IMR-90 (cell line): ENCODE measurements at regions of chr14 and their contacts with region 1.

Region 1: GRCh38 chr14:63543000-63543825 is at the start of gene PPP2R5E:
- DNase-seq: peak; percentile 99
- ATAC-seq: peak; percentile 97
- H3K4me3 ChIP-seq: peak within 1 kb of the TSS; percentile 72
- H3K27ac ChIP-seq: peak within 1 kb of the TSS; percentile 80
- H3K4me1 ChIP-seq: no peaks in the 10 kb centered on the region
- H3K27me3 ChIP-seq: no peaks in the 10 kb centered on the region
- CTCF ChIP-seq: no peak
- POLR2A ChIP-seq: peak; percentile 84
- RAD21 ChIP-seq: 0 out of 2 replicates have a peak, but pooled peaks have one; percentile 14
- total RNA-seq, gene PPP2R5E: 12.2 and 21.1 TPM in 2 replicates

Region 2: DNA sequence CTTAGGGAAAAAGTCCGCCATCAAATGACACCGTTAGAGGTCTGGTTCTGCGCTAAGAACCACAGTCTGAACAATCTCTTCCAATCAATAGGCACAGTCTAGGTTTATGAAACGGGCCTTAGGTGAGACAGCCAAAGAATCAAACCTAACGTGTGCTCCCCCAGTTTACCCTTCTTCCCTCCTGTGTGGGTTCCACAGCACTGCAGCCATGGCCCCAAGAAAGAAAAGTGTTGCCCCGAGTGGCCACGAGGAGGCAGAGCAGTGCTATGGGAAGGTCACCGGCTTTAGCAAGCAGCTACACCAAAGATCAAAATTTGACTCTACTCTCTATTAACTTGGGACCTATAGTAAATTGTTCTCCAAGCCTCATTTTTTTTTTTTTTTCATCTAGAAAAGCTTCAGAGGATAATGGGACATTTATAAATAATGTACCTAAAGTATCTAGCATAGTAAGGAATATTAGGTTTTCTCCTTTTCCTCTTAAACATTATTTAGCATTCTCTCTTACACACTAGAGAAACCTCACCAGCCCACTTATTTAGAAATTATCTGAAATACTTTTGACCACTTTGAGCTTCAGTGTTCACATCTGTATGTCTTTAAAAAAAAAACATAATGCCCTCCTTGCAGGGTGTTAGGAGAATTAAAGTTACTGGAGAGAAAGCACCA is 154.3 kb before region 1 on chr14:
- CTCF ChIA-PET with region 1: interaction called, 5 read pairs
- POLR2A ChIA-PET with region 1: no interaction called
- dilution Hi-C with region 1: no loop called
- in situ Hi-C with region 1: loop called (anchors 5 kb)
- intact Hi-C with region 1: loop called (anchors 1 kb)
- DNase-seq: peak; percentile 58
- ATAC-seq: peak; percentile 95
- H3K4me3 ChIP-seq: no peak overlapping the region
- H3K27ac ChIP-seq: no peak overlapping the region
- H3K4me1 ChIP-seq: no peaks in the 10 kb centered on the region
- H3K27me3 ChIP-seq: no peaks in the 10 kb centered on the region
- CTCF ChIP-seq: peak; percentile 85
- POLR2A ChIP-seq: no peak
- RAD21 ChIP-seq: peak; percentile 89

Region 3: GRCh38 chr14:63437953-63438757 is 105.1 kb before region 1 on chr14:
- CTCF ChIA-PET with region 1: no interaction called
- POLR2A ChIA-PET with region 1: no interaction called
- dilution Hi-C with region 1: no loop called
- in situ Hi-C with region 1: no loop called
- intact Hi-C with region 1: loop called (anchors 2 kb)
- DNase-seq: peak; percentile 92
- ATAC-seq: peak; percentile 56
- H3K4me3 ChIP-seq: peak overlapping the region; percentile 36; the same call in 1 of the 2 replicates
- H3K27ac ChIP-seq: peak overlapping the region; percentile 30; the same call in 1 of the 2 replicates
- H3K4me1 ChIP-seq: peaks cover 10% of the 10 kb centered on the region
- H3K27me3 ChIP-seq: no peaks in the 10 kb centered on the region
- CTCF ChIP-seq: no peak
- POLR2A ChIP-seq: no peak
- RAD21 ChIP-seq: no peak

Region 4: DNA sequence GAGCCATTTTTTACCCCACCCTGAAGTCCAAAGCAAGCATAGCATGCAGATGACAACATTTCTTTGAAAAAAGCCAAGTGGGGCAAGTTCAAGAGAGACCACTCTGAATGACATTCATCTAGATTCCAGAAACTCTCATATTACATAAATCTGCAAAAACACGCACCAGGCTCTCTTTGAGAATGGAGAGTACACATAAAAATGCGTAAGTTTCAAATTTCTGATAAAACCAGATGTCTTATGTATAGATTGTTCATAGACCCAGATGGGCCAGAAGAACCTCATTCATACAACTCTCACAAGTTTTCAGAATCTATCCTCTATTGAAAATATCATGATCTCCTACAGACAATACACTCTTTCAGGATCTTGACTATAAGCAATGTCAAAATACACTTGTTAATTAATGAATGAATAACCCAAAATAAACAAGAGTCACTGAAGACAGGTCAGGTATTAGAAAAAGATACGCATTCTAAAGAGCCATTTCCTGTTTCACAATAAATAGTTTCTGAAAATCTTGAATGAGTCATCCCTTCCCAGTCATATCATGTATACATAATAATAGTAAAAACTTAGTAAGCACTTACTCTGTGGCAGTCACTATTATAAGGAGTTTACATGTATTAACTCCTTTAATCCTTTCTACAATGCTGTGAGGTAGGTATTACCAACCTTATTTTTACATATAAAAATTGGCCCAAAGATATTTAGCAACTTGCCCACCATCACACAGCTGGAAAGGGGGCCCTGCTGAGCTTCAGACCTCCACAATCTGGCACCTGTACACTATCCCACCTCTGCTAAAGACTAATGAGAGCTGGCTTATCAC is 72.0 kb before region 1 on chr14:
- CTCF ChIA-PET with region 1: no interaction called
- POLR2A ChIA-PET with region 1: no interaction called
- dilution Hi-C with region 1: no loop called
- in situ Hi-C with region 1: no loop called
- intact Hi-C with region 1: loop called (anchors 5 kb)
- DNase-seq: peak; percentile 91
- ATAC-seq: peak; percentile 90
- H3K4me3 ChIP-seq: no peak overlapping the region
- H3K27ac ChIP-seq: peak overlapping the region; percentile 54; the same call in 1 of the 2 replicates
- H3K4me1 ChIP-seq: peaks cover 23% of the 10 kb centered on the region
- H3K27me3 ChIP-seq: no peaks in the 10 kb centered on the region
- CTCF ChIP-seq: no peak
- POLR2A ChIP-seq: no peak
- RAD21 ChIP-seq: no peak

Region 5: GRCh38 chr14:63641473-63642228 is 98.4 kb after region 1 on chr14 and contains the start of gene WDR89:
- CTCF ChIA-PET with region 1: no interaction called
- POLR2A ChIA-PET with region 1: no interaction called
- dilution Hi-C with region 1: no loop called
- in situ Hi-C with region 1: no loop called
- intact Hi-C with region 1: loop called (anchors 1 kb)
- DNase-seq: peak; percentile 100
- ATAC-seq: peak; percentile 95
- H3K4me3 ChIP-seq: peak within 1 kb of the TSS; percentile 77
- H3K27ac ChIP-seq: peak within 1 kb of the TSS; percentile 71
- H3K4me1 ChIP-seq: no peaks in the 10 kb centered on the region
- H3K27me3 ChIP-seq: no peaks in the 10 kb centered on the region
- CTCF ChIP-seq: peak; percentile 66
- POLR2A ChIP-seq: peak; percentile 65; the same call in 1 of the 2 replicates
- RAD21 ChIP-seq: peak; percentile 51
- total RNA-seq, gene WDR89: 10.2 and 22.5 TPM in 2 replicates

Region 6: DNA sequence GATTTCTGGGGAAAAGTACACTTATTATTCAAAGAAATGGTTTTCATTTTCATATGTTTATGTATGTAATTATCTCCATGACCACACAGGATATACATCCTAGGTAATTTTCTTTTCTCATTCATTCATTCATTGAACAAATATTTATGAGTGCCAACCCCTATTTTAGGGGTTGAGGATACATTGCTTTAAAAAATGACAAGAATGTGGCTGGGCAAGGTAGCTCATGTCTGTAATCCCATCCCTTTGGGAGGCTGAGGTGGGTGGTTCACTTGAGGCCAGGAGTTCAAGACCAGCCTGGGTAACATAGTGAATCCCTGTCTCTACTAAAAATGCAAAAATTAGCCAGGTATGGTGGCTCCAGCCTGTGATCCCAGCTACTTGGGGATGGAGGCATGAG is 143.7 kb after region 1 on chr14:
- CTCF ChIA-PET with region 1: no interaction called
- POLR2A ChIA-PET with region 1: no interaction called
- dilution Hi-C with region 1: no loop called
- in situ Hi-C with region 1: no loop called
- intact Hi-C with region 1: no loop called
- DNase-seq: no peak
- ATAC-seq: no peak
- H3K4me3 ChIP-seq: no peak overlapping the region
- H3K27ac ChIP-seq: no peak overlapping the region
- H3K4me1 ChIP-seq: no peaks in the 10 kb centered on the region
- H3K27me3 ChIP-seq: no peaks in the 10 kb centered on the region
- CTCF ChIP-seq: no peak
- POLR2A ChIP-seq: no peak
- RAD21 ChIP-seq: no peak

Region 7: DNA sequence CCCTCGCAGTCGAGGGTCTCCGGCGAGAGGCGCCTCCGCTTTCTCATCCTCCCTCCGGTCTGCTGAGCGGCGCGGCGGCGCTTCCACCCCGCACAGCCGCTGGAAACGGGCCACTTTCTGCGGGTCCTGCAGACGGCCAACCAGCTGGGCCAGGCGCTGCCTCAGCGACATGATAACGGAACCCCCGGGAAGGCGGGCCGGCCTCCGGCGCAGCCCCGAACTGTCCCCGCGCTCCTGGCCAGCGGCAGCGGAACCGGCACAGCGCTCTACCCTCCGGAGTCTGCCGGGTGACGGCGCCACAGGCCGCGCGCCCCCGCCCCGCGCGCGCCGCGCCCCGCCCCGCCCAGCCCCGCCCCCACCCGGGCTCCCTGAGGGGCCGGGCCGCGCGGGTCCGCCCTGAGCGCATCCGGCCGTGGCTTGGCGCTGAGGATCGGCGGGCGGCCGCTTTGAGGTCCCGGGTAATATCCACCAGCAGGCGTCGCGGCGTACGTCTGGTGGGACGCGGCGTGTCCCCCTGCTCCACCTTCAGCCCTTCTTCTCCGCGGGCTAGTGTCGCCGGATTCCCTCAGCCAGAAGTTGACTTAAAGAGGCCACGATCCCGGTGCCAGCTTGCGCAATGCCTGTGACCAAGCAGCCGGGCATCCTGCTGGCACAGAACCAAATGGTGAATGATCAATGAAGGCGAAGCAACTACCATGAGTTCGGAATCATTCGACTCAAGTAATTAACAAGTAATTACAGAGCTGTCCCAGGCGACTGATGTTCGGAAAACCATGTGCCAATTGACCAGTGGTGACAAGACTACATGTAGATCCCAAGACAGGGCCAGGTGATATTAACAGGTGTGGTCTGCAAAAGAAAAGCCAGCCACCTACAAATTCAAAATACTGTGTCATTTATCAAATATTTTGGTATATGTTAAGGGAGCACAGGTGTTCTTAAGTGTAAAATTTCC is 184.8 kb after region 1 on chr14 and contains the start of gene SGPP1:
- CTCF ChIA-PET with region 1: no interaction called
- POLR2A ChIA-PET with region 1: no interaction called
- dilution Hi-C with region 1: no loop called
- in situ Hi-C with region 1: no loop called
- intact Hi-C with region 1: loop called (anchors 5 kb)
- DNase-seq: peak; percentile 55
- ATAC-seq: peak; percentile 95
- H3K4me3 ChIP-seq: peak within 1 kb of the TSS; percentile 100
- H3K27ac ChIP-seq: peak within 1 kb of the TSS; percentile 81
- H3K4me1 ChIP-seq: no peaks in the 10 kb centered on the region
- H3K27me3 ChIP-seq: no peaks in the 10 kb centered on the region; the same call in 1 of the 2 replicates
- CTCF ChIP-seq: peak; percentile 31
- POLR2A ChIP-seq: peak; percentile 53; the same call in 1 of the 2 replicates
- RAD21 ChIP-seq: no peak; the same call in none of the 2 replicates
- total RNA-seq, gene SGPP1: 11.1 and 23.1 TPM in 2 replicates

Region 8: DNA sequence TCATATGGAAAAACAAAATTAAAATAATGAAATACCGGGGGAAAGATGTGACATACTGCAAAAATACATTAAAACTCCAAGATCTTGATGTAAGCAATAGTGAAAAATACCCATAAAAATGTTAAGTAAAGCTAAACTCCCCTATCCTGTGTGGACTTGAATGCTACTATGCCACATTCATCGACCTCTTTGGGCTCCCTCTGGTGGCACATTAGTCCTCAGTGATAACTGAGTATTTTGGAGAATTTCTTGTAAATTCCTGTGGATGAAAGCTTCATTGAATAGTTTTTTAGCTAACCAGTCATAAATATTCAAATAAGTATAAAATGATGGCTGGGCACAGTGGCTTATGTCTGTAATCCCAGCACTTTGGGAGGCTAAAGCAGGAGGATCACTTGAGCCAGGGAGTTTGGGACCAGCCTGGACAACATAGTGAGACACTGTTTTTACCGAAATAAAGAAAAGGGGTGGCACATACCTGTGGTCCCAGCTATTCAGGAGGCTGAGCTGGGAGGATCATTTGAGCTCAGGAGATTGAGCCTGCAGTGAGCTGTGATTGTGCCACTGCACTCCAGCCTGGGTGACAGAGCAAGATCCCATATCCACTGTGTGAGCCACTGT is 227.1 kb after region 1 on chr14:
- CTCF ChIA-PET with region 1: no interaction called
- POLR2A ChIA-PET with region 1: no interaction called
- dilution Hi-C with region 1: no loop called
- in situ Hi-C with region 1: no loop called
- intact Hi-C with region 1: loop called (anchors 10 kb)
- DNase-seq: peak; percentile 62
- ATAC-seq: peak; percentile 94
- H3K4me3 ChIP-seq: no peak overlapping the region
- H3K27ac ChIP-seq: no peak overlapping the region
- H3K4me1 ChIP-seq: peaks cover 3% of the 10 kb centered on the region; the same call in 1 of the 2 replicates
- H3K27me3 ChIP-seq: no peaks in the 10 kb centered on the region; the same call in 1 of the 2 replicates
- CTCF ChIP-seq: peak; percentile 70
- POLR2A ChIP-seq: no peak
- RAD21 ChIP-seq: peak; percentile 66